CD8-positive, alpha-beta T cell (primary cell): ENCODE measurements at regions of chr2 and their contacts with region 1.

Region 1: GRCh38 chr2:240066487-240066886 is 13.2 kb upstream of the OR6B3 start:
- DNase-seq: no peak
- ATAC-seq: no peak
- H3K4me3 ChIP-seq: no peak overlapping the region
- H3K4me3 Mint-ChIP-seq: no peak overlapping the region
- H3K27ac ChIP-seq: no peak overlapping the region
- H3K27ac Mint-ChIP-seq: no peak overlapping the region
- H3K4me1 ChIP-seq: no peaks in the 10 kb centered on the region
- H3K4me1 Mint-ChIP-seq: no peaks in the 10 kb centered on the region
- H3K27me3 ChIP-seq: no peaks in the 10 kb centered on the region
- H3K27me3 Mint-ChIP-seq: peaks cover 23% of the 10 kb centered on the region
- CTCF ChIP-seq: no peak

Region 2: GRCh38 chr2:240078631-240079030 is 12.1 kb after region 1 on chr2:
- CTCF ChIA-PET with region 1: interaction called, 9 read pairs
- POLR2A ChIA-PET with region 1: interaction called, 4 read pairs
- intact Hi-C with region 1: loop called in 1 of 2 experiments (anchors 1 kb)
- DNase-seq: no peak
- ATAC-seq: no peak
- H3K4me3 ChIP-seq: no peak overlapping the region
- H3K4me3 Mint-ChIP-seq: no peak overlapping the region
- H3K27ac ChIP-seq: no peak overlapping the region
- H3K27ac Mint-ChIP-seq: no peak overlapping the region
- H3K4me1 ChIP-seq: no peaks in the 10 kb centered on the region
- H3K4me1 Mint-ChIP-seq: no peaks in the 10 kb centered on the region
- H3K27me3 ChIP-seq: no peaks in the 10 kb centered on the region
- H3K27me3 Mint-ChIP-seq: peaks cover 23% of the 10 kb centered on the region
- CTCF ChIP-seq: no peak